ENCODE measurements at regions of chr20 and their contacts with region 1.

Region 1: DNA sequence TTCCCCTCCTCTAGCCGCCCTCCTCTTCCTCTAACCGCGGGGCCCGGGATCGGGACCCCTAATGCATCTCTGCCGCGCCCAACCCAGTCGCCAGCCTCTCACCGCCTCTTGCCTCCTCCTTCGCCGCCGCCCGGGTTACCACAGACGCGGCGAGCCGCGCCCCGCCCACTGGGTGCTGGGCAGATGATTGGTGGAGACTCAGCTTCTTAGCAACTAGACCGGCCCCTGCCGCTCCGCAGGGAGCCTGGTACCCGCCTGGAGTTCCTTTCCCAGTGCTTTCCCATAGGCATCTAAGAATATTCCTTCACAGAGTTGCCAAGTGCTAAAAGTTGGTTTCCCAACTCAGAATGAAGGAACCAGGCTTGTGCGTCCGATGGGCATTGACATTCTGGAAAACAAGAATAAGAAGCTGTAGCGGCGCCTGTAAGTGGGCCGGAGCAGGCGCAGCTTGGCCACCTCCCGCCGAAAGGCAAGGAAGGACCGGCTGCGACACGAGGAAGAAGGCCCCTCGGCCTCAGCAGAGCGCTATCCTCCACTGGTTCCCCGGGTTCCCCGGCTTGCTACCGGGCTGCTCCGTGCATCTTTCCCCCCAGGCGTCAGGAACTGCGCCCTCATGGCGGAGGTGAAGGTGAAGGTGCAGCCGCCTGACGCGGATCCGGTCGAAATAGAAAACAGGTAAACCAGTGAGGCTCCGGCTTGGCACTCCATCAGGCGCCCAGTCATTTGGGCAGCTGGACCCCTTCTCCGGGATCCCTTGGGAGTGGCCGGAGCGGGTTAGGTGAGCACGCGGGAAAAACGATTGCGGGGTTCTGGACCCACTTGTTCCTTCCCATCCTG is at the starts of genes DZANK1 and POLR3F:
- DNase-seq: peak; percentile 90
- H3K4me3 Mint-ChIP-seq: peak within 1 kb of the TSS; percentile 99
- H3K27ac Mint-ChIP-seq: peak within 1 kb of the TSS; percentile 92
- H3K4me1 Mint-ChIP-seq: peaks cover 31% of the 10 kb centered on the region
- H3K27me3 Mint-ChIP-seq: no peaks in the 10 kb centered on the region
- total RNA-seq, gene DZANK1: 1.1 and 1.8 TPM in 2 replicates
- total RNA-seq, gene POLR3F: 13.4 and 16.6 TPM in 2 replicates

Region 2: GRCh38 chr20:18176318-18176785 is 290.8 kb before region 1 on chr20:
- intact Hi-C with region 1: no loop called
- DNase-seq: no peak
- H3K4me3 Mint-ChIP-seq: no peak overlapping the region
- H3K27ac Mint-ChIP-seq: no peak overlapping the region
- H3K4me1 Mint-ChIP-seq: no peaks in the 10 kb centered on the region
- H3K27me3 Mint-ChIP-seq: no peaks in the 10 kb centered on the region

Region 3: GRCh38 chr20:18496740-18497592 is 29.9 kb after region 1 on chr20 and contains the start of gene RBBP9:
- intact Hi-C with region 1: loop called (anchors 1 kb)
- DNase-seq: peak; percentile 70
- H3K4me3 Mint-ChIP-seq: peak within 1 kb of the TSS; percentile 91
- H3K27ac Mint-ChIP-seq: peak within 1 kb of the TSS; percentile 64
- H3K4me1 Mint-ChIP-seq: peaks cover 16% of the 10 kb centered on the region
- H3K27me3 Mint-ChIP-seq: no peaks in the 10 kb centered on the region
- total RNA-seq, gene RBBP9: 18.6 and 18.7 TPM in 2 replicates

Region 4: GRCh38 chr20:18587665-18588573 is 120.8 kb after region 1 on chr20 and contains the start of gene DTD1:
- intact Hi-C with region 1: loop called (anchors 1 kb)
- DNase-seq: peak; percentile 80
- H3K4me3 Mint-ChIP-seq: peak within 1 kb of the TSS; percentile 93
- H3K27ac Mint-ChIP-seq: peak within 1 kb of the TSS; percentile 82
- H3K4me1 Mint-ChIP-seq: peaks cover 25% of the 10 kb centered on the region
- H3K27me3 Mint-ChIP-seq: peaks cover 10% of the 10 kb centered on the region
- total RNA-seq, gene DTD1: 37.7 and 44.0 TPM in 2 replicates

Measured in activated T-helper 1 cell treated with anti-CD3 and anti-CD28 coated beads, Interleukin-12 subunit alpha, Interleukin-12 subunit beta, Interleukin-2, Interleukin-4 antibody, amounts not matched to agents 30 ng/mL and 10 ng/mL and 1 ng/mL, durations not matched to agents 14 hours and 24 hours and 36 hours (primary cell).